OCI-LY7 (cell line): ENCODE measurements at regions of chr1 and their contacts with region 1.

Region 1: DNA sequence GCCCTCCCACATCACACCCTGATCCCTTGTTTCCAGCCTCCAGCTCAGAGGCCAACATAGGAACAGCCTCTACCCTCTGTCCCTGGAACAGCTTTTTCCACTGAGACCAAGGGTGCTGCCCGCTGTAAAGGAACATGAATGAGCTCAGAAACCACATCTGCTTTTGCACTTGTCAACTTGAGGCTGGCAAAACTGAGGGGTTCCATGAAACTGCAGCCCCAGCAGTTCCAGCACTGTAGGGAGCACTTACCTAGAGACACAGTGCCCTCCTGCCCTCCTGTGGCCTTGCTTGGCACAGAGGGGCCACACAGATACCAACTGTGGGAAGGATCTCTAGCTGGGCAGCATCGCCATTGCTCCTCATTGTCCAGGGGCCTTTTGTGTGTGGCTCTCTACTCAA is 51.7 kb downstream of the ITPKB start:
- DNase-seq: peak; percentile 66
- H3K4me3 ChIP-seq: peak overlapping the region; percentile 27
- H3K27ac ChIP-seq: peak overlapping the region; percentile 73
- H3K4me1 ChIP-seq: peaks cover 99% of the 10 kb centered on the region
- CTCF ChIP-seq: peak; percentile 71

Region 2: GRCh38 chr1:226634166-226634588 is 53.2 kb before region 1 on chr1:
- CTCF ChIA-PET with region 1: interaction called, 7 read pairs
- POLR2A ChIA-PET with region 1: interaction called, 3 read pairs
- intact Hi-C with region 1: loop called (anchors 1 kb)
- DNase-seq: peak; percentile 81
- H3K4me3 ChIP-seq: no peak overlapping the region
- H3K27ac ChIP-seq: no peak overlapping the region
- H3K4me1 ChIP-seq: peaks cover 58% of the 10 kb centered on the region
- CTCF ChIP-seq: peak; percentile 98

Region 3: DNA sequence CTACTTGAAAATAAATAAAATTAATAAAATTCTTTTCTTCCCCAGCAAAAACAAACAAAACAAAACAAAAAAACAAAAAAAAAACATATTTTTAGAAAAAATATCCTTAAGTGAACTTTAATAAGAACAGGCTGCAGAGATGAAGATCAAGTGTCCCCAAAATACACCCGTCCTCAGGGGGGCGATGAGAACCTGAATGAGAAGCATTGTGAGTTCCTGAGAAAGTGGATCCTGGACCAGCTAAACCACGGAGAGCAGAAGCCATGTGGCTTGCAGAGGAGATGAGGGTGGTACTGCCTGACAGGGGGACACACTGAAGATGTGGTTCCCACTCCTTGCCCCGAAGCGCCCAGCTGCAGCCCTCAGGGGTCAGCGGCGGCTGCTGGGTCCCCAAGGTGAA is 37.6 kb before region 1 on chr1:
- CTCF ChIA-PET with region 1: interaction called, 28 read pairs
- POLR2A ChIA-PET with region 1: interaction called, 26 read pairs
- intact Hi-C with region 1: loop called (anchors 1 kb)
- DNase-seq: peak; percentile 66
- H3K4me3 ChIP-seq: no peak overlapping the region
- H3K27ac ChIP-seq: peak overlapping the region; percentile 66
- H3K4me1 ChIP-seq: peaks cover 10% of the 10 kb centered on the region
- CTCF ChIP-seq: peak; percentile 82

Region 4: GRCh38 chr1:226671290-226671689 is 16.1 kb before region 1 on chr1:
- CTCF ChIA-PET with region 1: interaction called, 3 read pairs
- POLR2A ChIA-PET with region 1: interaction called, 19 read pairs
- intact Hi-C with region 1: no loop called
- DNase-seq: peak; percentile 48
- H3K4me3 ChIP-seq: peak overlapping the region; percentile 31
- H3K27ac ChIP-seq: peak overlapping the region; percentile 98
- H3K4me1 ChIP-seq: peaks cover 96% of the 10 kb centered on the region
- CTCF ChIP-seq: no peak